Left ventricle myocardium inferior (tissue), 1 donor: ENCODE measurements at regions of chr11 and their contacts with region 1.

Region 1: GRCh38 chr11:13776134-13776815 is 107.8 kb downstream of the FAR1 start:
- DNase-seq: no peak
- H3K4me3 ChIP-seq: no peak overlapping the region
- H3K27ac ChIP-seq: no peak overlapping the region
- H3K4me1 ChIP-seq: no peaks in the 10 kb centered on the region
- H3K27me3 ChIP-seq: peaks cover 95% of the 10 kb centered on the region
- CTCF ChIP-seq: no peak

Region 2: GRCh38 chr11:14249121-14249963 is 473.1 kb after region 1 on chr11:
- intact Hi-C with region 1: loop called (anchors 2 kb)
- DNase-seq: peak; percentile 37
- H3K4me3 ChIP-seq: no peak overlapping the region
- H3K27ac ChIP-seq: no peak overlapping the region
- H3K4me1 ChIP-seq: peaks cover 11% of the 10 kb centered on the region
- H3K27me3 ChIP-seq: peaks cover 95% of the 10 kb centered on the region
- CTCF ChIP-seq: peak; percentile 92